PC-9 (cell line): ENCODE measurements at regions of chr20 and their contacts with region 1.

Region 1: GRCh38 chr20:34943808-34944568 is 11.6 kb downstream of the GSS start:
- DNase-seq: peak; percentile 67 to 87
- H3K4me3 ChIP-seq: no peak overlapping the region; the same call in 1 of the 2 replicates
- H3K27ac ChIP-seq: peak overlapping the region; percentile 97
- H3K4me1 ChIP-seq: peaks cover 63% of the 10 kb centered on the region
- H3K27me3 ChIP-seq: no peaks in the 10 kb centered on the region
- CTCF ChIP-seq: no peak

Region 2: DNA sequence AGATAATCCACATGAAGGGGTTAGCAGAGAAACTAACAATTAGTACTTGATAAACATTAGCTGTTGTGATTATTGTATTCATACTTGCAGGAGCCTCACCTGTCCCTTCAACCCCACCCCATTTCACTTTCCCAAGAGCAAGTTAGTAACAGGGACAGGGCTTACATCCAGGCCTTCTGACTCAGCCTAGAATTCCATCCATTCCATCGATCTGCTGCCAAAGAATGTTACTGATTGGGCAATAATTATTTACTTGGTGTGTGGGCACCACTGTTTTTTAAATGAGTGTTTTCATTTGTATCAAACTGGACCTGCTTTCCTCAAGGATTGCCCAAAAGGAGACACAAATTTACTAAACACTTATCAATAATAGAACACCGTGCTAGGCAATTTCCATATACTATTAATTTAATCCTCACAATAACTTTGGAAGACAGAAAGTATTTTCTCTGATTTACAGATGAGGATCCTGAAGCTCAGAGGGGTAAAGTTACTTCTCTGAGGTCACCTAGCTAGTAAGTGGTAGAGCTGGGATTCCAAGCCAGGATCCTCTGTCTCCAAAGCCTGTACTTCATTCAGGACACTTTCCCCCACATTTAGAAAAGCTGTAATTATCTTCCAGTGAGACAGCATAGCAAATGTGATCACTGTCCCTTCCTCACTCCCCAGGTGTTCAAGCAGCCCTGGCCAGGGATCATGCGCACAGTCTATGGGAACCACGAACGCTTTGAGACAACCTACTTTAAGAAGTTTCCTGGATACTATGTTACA is 21.1 kb before region 1 on chr20:
- CTCF ChIA-PET with region 1: no interaction called
- POLR2A ChIA-PET with region 1: no interaction called
- intact Hi-C with region 1: loop called (anchors 2 kb)
- DNase-seq: peak; percentile 65 to 96
- H3K4me3 ChIP-seq: peak overlapping the region; percentile 19; the same call in 1 of the 2 replicates
- H3K27ac ChIP-seq: peak overlapping the region; percentile 89
- H3K4me1 ChIP-seq: peaks cover 76% of the 10 kb centered on the region
- H3K27me3 ChIP-seq: no peaks in the 10 kb centered on the region
- CTCF ChIP-seq: no peak